ENCODE measurements at regions of chr12 and their contacts with region 1.

Region 1: DNA sequence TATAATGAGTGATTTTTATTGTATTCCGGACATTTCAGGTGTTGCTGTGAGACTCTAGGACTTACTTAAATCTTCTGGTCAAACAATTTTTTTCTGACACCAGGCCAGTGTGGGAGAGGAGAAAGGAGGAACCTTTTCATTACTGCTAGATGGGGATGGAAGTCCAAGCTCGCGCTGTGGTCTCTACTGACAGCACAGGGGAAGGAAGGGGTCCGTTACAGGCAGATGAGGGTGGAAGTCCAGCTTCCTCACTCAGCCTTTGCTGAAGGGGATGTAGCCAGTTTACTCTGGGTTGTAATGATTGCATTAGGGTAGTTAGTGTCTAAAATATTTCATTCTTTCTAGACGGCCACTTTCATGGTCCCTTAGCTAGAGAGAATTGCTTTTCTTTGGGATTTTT is 26.3 kb upstream of the ST8SIA1 start:
- DNase-seq: no peak
- ATAC-seq: no peak
- H3K4me3 ChIP-seq: no peak overlapping the region
- H3K27ac ChIP-seq: no peak overlapping the region
- H3K4me1 ChIP-seq: no peaks in the 10 kb centered on the region
- H3K27me3 ChIP-seq: no peaks in the 10 kb centered on the region
- CTCF ChIP-seq: no peak

Region 2: DNA sequence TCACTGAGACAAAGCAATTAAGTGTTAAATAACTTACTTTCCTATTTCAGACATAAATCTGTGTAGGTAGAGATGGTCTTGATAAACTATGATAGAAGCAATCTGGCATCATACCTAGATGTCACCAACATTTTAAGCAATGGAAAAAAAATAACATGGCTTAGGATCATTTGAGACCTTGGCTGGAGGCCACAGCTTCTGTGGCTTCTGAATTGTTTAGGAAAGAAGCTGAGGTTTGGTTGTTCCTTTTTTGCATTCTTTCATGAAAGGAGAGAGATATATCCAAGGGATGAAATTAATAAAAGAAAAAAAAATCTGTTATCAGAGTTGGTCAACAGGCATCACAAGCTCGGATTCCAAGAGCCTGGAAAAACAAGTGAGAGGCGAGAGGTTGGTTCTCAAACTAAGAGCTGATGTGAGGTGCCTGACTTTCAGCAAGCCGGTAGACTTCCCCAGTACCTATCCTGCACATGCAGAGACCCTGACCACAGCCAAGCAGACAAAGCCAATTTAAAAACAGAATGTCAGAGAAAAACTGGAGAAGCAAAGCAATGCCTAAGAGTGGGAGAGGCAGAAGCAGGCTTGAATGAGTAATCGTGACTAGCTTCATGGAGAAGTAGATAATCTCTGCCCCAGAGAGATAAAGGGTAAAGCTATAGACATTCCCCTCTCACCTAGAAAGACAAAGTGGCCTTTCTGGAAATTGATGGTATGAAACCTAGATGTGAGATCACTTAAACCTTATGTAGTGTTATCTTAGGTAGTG is 17.1 kb after region 1 on chr12:
- CTCF ChIA-PET with region 1: interaction called, 11 read pairs
- POLR2A ChIA-PET with region 1: no interaction called
- in situ Hi-C with region 1: no loop called
- intact Hi-C with region 1: no loop called
- DNase-seq: no peak
- ATAC-seq: no peak
- H3K4me3 ChIP-seq: no peak overlapping the region
- H3K27ac ChIP-seq: no peak overlapping the region
- H3K4me1 ChIP-seq: no peaks in the 10 kb centered on the region
- H3K27me3 ChIP-seq: no peaks in the 10 kb centered on the region
- CTCF ChIP-seq: no peak